Right ventricle myocardium superior (tissue), 1 donor: ENCODE measurements at regions of chr2 and their contacts with region 1.

Region 1: GRCh38 chr2:102251042-102251848 is 60.1 kb upstream of the IL1RL1 start:
- DNase-seq: peak; percentile 76
- ATAC-seq: peak; percentile 87

Region 2: GRCh38 chr2:102355526-102356380 is 104.5 kb after region 1 on chr2 and contains the start of gene IL18R1:
- intact Hi-C with region 1: loop called (anchors 5 kb)
- DNase-seq: peak; percentile 87
- ATAC-seq: peak; percentile 100
- total RNA-seq, gene IL18R1: 0.67 TPM